ENCODE measurements at regions of chr17 and their contacts with region 1.

Region 1: DNA sequence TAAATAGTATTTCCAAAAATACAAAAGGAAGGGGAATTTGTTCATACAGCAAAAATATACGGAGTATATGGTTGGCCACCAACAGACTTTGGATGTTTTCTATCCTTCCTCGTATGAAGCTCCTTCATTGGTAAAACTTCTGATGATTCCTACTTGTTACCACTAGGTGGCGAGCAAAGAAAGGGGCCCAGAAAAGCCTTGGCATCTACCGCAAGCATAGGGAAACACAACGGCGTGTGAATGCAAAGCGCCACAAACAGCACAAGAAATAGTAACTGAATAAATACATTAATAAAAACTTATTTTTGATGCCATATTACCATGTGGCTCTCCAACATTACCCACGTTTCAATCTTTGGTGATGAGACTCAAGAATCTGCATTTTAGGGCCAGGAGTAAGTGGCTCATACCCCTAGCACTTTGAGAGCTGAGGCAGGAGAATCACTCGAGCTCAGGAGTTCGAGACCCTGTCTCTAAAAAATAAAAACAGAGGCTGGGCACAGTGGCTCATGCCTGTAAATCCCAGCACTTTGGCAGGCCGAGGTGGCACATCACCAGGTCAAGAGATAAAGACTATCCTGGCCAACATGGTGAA is 34.5 kb downstream of the YWHAE start:
- DNase-seq: peak; percentile 65
- H3K4me3 Mint-ChIP-seq: no peak overlapping the region
- H3K27ac Mint-ChIP-seq: no peak overlapping the region
- H3K4me1 Mint-ChIP-seq: peaks cover 68% of the 10 kb centered on the region
- H3K27me3 Mint-ChIP-seq: no peaks in the 10 kb centered on the region

Region 2: GRCh38 chr17:1340371-1340770 is 25.2 kb before region 1 on chr17:
- CTCF ChIA-PET with region 1: interaction called, 13 read pairs
- POLR2A ChIA-PET with region 1: interaction called, 6 read pairs
- DNase-seq: no peak
- H3K4me3 Mint-ChIP-seq: no peak overlapping the region
- H3K27ac Mint-ChIP-seq: no peak overlapping the region
- H3K4me1 Mint-ChIP-seq: peaks cover 2% of the 10 kb centered on the region
- H3K27me3 Mint-ChIP-seq: no peaks in the 10 kb centered on the region

Region 3: GRCh38 chr17:1390433-1391367 is 25.2 kb after region 1 on chr17:
- CTCF ChIA-PET with region 1: interaction called, 44 read pairs
- POLR2A ChIA-PET with region 1: interaction called, 15 read pairs
- DNase-seq: no peak
- H3K4me3 Mint-ChIP-seq: no peak overlapping the region
- H3K27ac Mint-ChIP-seq: peak overlapping the region; percentile 12
- H3K4me1 Mint-ChIP-seq: peaks cover 63% of the 10 kb centered on the region
- H3K27me3 Mint-ChIP-seq: no peaks in the 10 kb centered on the region

Region 4: DNA sequence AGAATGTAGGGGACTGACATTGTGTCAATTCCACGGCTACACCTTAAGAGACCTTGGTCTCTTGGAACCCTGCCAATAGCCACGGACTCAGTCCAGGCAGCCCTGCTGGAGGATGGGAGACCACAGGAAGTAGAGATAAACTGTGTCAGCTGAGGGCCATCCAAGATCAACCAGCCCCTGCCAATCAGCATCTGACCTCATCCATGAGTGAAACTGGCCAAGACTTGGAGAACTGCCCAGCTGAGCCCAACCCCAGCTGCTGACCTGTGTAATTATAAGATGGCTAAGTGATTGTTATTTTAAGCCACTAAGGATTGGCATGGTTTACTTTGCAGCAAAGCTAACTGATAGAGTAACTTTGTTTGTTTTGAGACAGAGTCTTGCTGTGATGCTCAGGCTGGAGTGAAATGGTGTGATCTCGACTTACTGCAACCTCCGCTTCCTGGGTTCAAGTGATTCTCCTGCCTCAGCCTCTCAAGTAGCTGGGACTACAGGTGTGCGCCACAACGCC is 47.8 kb after region 1 on chr17:
- CTCF ChIA-PET with region 1: interaction called, 10 read pairs
- POLR2A ChIA-PET with region 1: no interaction called
- DNase-seq: no peak
- H3K4me3 Mint-ChIP-seq: no peak overlapping the region
- H3K27ac Mint-ChIP-seq: no peak overlapping the region
- H3K4me1 Mint-ChIP-seq: peaks cover 2% of the 10 kb centered on the region
- H3K27me3 Mint-ChIP-seq: no peaks in the 10 kb centered on the region

Region 5: DNA sequence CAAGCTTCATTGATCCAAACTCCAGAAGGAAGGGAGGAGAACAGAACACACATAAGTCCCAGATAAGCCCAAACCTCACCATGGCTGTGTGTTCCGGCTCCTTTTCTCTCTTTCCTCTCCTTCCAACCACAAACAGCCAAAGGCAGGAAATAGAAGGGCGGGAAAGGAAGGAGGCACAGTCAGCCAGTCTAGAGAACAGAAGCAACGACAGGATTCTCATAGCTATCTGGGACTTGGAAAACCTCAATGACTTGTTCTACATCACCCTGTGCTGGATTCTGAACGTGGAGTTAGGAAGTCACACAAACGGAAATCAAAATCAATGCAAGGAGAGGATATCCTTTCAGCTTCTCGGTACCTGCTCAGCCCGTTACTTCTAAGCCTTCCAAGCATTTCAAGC is 81.5 kb after region 1 on chr17:
- CTCF ChIA-PET with region 1: no interaction called
- POLR2A ChIA-PET with region 1: no interaction called
- DNase-seq: no peak
- H3K4me3 Mint-ChIP-seq: no peak overlapping the region
- H3K27ac Mint-ChIP-seq: no peak overlapping the region
- H3K4me1 Mint-ChIP-seq: peaks cover 32% of the 10 kb centered on the region
- H3K27me3 Mint-ChIP-seq: no peaks in the 10 kb centered on the region

Region 6: DNA sequence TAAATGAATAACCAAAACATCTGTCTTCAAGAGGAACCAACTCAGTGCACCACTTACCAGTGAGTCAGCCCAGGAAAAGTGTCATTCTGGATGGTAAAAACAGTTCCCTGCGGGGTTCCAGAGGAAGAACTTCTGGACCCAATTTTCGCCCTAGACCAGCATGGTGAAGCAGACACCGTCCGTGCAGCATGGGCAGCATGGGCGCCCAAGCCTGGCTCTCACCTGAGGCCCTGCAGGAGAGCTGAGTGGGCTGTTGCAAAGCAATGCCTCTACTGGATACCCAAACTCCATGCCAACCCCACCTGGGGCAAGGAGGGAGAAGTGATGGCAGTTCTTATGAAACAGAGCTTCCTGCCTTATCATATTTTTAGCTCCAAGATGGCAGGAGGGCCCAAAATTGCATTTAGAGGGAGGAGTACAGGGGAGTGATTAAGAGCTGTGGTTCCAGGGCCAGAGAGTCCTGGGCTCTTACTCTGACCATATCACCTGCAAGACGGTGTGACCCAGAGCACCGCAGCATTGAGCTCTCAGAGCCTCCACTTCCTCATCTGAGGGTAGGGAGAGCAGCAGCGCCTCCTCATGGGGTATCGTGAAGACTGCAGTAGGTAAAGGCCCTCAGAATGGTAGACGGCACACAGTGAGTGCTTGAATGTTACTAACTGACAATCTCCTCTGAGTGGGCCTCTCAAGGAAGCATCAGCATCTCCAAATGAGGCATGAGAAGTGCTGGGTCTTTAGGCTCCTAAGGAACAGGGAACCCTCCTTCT is 167.5 kb after region 1 on chr17:
- CTCF ChIA-PET with region 1: interaction called, 15 read pairs
- POLR2A ChIA-PET with region 1: no interaction called
- DNase-seq: peak; percentile 54
- H3K4me3 Mint-ChIP-seq: no peak overlapping the region
- H3K27ac Mint-ChIP-seq: no peak overlapping the region
- H3K4me1 Mint-ChIP-seq: no peaks in the 10 kb centered on the region
- H3K27me3 Mint-ChIP-seq: no peaks in the 10 kb centered on the region

Measured in activated CD4-positive, alpha-beta memory T cell treated with anti-CD3 and anti-CD28 coated beads, Interleukin-2, amount 10 ng/mL, durations not matched to agents 7 days and 5 days (primary cell).